Transverse colon (tissue), 4 donors: ENCODE measurements at regions of chr5 and their contacts with region 1.

Region 1: DNA sequence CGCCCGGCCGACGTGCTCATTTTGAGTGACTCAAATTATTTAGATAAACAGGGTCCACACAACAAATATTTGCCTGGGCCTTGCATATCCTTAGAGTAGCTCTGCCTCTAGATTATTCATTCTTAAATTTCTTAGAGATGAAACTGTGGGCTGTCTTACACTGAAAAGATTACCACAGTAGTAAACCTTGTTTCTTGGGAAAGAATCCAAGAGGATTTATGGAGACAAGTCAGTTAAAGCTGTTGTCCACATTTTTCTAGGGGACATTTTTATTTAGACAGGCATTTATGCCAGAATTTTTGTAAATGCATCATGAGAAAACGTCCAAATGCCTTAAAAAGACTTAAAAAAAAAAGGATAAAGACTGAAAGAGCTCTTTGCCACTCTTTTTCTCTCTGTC is 32.6 kb upstream of the RANBP3L start:
- DNase-seq: no peak
- H3K4me3 ChIP-seq: no peak overlapping the region
- H3K27ac ChIP-seq: no peak overlapping the region
- H3K4me1 ChIP-seq: peaks cover 0 to 3% (median 0%) of the 10 kb centered on the region in 4 donors
- H3K27me3 ChIP-seq: no peaks in the 10 kb centered on the region
- CTCF ChIP-seq: no peak
- EP300 ChIP-seq: no peak
- POLR2A ChIP-seq: no peak

Region 2: DNA sequence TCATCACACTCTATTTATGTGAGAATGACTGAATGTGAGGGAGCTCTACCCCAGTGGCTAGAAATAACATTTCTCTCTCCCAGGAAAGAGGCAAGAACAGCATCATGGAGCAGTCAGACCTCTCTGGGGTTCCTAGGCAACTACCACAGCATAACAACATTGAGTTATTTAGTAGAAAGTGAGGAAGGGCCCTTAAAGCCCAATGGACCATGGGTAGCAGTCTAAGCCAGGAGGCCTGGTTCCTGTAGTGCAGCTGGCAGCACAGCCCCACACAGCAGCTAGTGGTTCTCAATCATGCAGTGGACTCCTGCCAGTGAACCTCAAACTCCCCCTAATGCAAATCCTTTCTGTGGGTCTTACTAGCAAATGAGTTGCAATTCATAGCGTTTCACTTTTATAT is 661.3 kb before region 1 on chr5:
- in situ Hi-C with region 1: no loop called
- intact Hi-C with region 1: no loop called
- DNase-seq: no peak
- H3K4me3 ChIP-seq: no peak overlapping the region
- H3K27ac ChIP-seq: no peak overlapping the region
- H3K4me1 ChIP-seq: no peaks in the 10 kb centered on the region
- H3K27me3 ChIP-seq: no peaks in the 10 kb centered on the region
- CTCF ChIP-seq: no peak
- EP300 ChIP-seq: no peak
- POLR2A ChIP-seq: no peak

Region 3: DNA sequence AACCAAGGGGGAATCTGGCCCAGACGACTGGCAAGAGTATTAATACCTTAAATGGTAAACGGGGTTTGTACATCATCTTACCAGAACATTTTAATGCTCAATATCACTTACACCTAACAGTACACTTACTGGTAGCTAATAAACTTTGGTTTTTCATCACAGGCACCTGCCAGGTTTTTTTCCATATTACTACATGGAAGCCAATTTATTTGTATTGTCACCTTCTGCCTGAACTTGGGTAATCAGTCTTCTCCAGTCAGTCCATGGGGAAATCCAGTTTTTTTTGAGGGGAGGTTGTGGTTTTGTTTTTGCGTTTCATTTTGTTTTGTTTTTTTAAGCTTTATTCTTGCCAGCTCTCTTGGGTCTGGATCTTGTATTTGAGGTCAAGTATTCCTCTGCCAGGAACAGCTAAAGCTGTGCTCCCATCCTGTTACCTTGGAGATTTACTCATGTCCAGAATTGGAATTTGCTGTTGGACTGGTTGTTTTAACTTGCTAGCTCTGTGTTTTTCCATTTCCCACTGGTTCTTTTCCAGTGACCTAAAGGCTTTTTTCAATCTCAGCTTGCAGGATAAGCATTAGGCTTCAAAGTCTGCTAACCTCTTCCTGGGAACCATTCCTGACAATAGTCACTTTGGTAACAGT is 81.5 kb before region 1 on chr5:
- in situ Hi-C with region 1: no loop called
- intact Hi-C with region 1: no loop called
- DNase-seq: no peak
- H3K4me3 ChIP-seq: no peak overlapping the region
- H3K27ac ChIP-seq: peak overlapping the region in 2 of 4 donors; percentile 32 to 40
- H3K4me1 ChIP-seq: no peaks in the 10 kb centered on the region
- H3K27me3 ChIP-seq: no peaks in the 10 kb centered on the region
- CTCF ChIP-seq: no peak
- EP300 ChIP-seq: no peak
- POLR2A ChIP-seq: no peak

Region 4: DNA sequence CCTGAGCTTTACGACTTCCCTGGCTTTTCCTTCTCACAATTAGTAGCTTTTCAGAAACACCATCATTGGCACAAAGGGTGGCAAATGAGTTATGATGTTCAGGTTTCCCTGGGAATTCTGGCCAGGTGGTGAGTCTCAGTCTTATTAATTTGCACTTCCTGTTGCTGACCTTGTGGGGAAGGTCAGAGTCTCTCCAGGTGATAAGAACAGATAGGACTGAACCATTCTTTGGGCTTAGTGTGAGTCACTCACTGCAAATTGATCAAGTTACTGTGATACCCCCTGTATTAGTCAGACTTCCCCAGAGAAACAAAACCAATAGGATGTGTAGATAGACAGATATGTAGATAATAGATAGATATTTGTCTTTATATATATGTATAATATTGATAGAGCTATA is 21.2 kb after region 1 on chr5:
- in situ Hi-C with region 1: no loop called
- intact Hi-C with region 1: loop called (anchors 1 kb)
- DNase-seq: no peak
- H3K4me3 ChIP-seq: no peak overlapping the region
- H3K27ac ChIP-seq: no peak overlapping the region
- H3K4me1 ChIP-seq: no peaks in the 10 kb centered on the region
- H3K27me3 ChIP-seq: no peaks in the 10 kb centered on the region
- CTCF ChIP-seq: no peak
- EP300 ChIP-seq: no peak
- POLR2A ChIP-seq: no peak